ENCODE measurements at regions of chr14 and their contacts with region 1.

Region 1: GRCh38 chr14:100375963-100376735 is 53.0 kb downstream of the SLC25A47 start:
- DNase-seq: peak; percentile 95 to 97 (median 97)
- ATAC-seq: peak; percentile 92 to 97 (median 94)
- H3K4me3 ChIP-seq: peak within 1 kb of the TSS; percentile 61 to 94 (median 76)
- H3K27ac ChIP-seq: peak within 1 kb of the TSS; percentile 85 to 98 (median 94)
- H3K4me1 ChIP-seq: peaks cover 0 to 55% (median 18%) of the 10 kb centered on the region in 12 donors
- H3K27me3 ChIP-seq: no peaks in the 10 kb centered on the region
- CTCF ChIP-seq: no peak
- POLR2A ChIP-seq: peak in 1 of 2 donors; percentile 78

Region 2: GRCh38 chr14:100122481-100123222 is 253.5 kb before region 1 on chr14:
- intact Hi-C with region 1: loop called in 1 of 10 experiments (anchors 10 kb)
- DNase-seq: no peak
- ATAC-seq: peak in 2 of 4 donors; percentile 34 to 51
- H3K4me3 ChIP-seq: no peak overlapping the region
- H3K27ac ChIP-seq: no peak overlapping the region
- H3K4me1 ChIP-seq: peaks cover 0 to 4% (median 0%) of the 10 kb centered on the region in 12 donors
- H3K27me3 ChIP-seq: no peaks in the 10 kb centered on the region
- CTCF ChIP-seq: peak in 4 of 12 donors; percentile 6 to 24 (median 12)
- POLR2A ChIP-seq: no peak

Region 3: GRCh38 chr14:100239840-100240724 is 136.1 kb before region 1 on chr14:
- intact Hi-C with region 1: loop called in 6 of 10 experiments (anchors 1 to 10 kb)
- DNase-seq: peak; percentile 87 to 93 (median 92)
- ATAC-seq: peak; percentile 53 to 74 (median 70)
- H3K4me3 ChIP-seq: peak overlapping the region; percentile 84 to 100 (median 99)
- H3K27ac ChIP-seq: peak overlapping the region; percentile 91 to 100 (median 99)
- H3K4me1 ChIP-seq: peaks cover 15 to 68% (median 54%) of the 10 kb centered on the region in 12 donors
- H3K27me3 ChIP-seq: no peaks in the 10 kb centered on the region
- CTCF ChIP-seq: peak; percentile 25 to 90 (median 75)
- POLR2A ChIP-seq: peak in 1 of 2 donors; percentile 63

Region 4: GRCh38 chr14:100285021-100285912 is 90.9 kb before region 1 on chr14:
- intact Hi-C with region 1: loop called in 4 of 10 experiments (anchors 5 kb)
- DNase-seq: peak; percentile 62 to 90 (median 80)
- ATAC-seq: peak; percentile 36 to 92 (median 82)
- H3K4me3 ChIP-seq: peak overlapping the region; percentile 60 to 98 (median 80)
- H3K27ac ChIP-seq: peak overlapping the region; percentile 59 to 94 (median 87)
- H3K4me1 ChIP-seq: peaks cover 0 to 70% (median 15%) of the 10 kb centered on the region in 12 donors
- H3K27me3 ChIP-seq: no peaks in the 10 kb centered on the region
- CTCF ChIP-seq: peak; percentile 52 to 89 (median 72)
- POLR2A ChIP-seq: peak in 1 of 2 donors; percentile 64

Measured in heart left ventricle (tissue), 16 donors.